ENCODE measurements at regions of chr11 and their contacts with region 1.

Region 1: GRCh38 chr11:77994412-77995362 is at the start of gene INTS4:
- DNase-seq: peak; percentile 99
- H3K4me3 ChIP-seq: peak within 1 kb of the TSS; percentile 69
- H3K27ac ChIP-seq: peak within 1 kb of the TSS; percentile 65
- H3K4me1 ChIP-seq: no peaks in the 10 kb centered on the region
- H3K27me3 ChIP-seq: no peaks in the 10 kb centered on the region
- CTCF ChIP-seq: no peak
- total RNA-seq, gene INTS4: 21.5 to 28.0 TPM

Region 2: GRCh38 chr11:77801477-77801876 is 193.2 kb before region 1 on chr11:
- intact Hi-C with region 1: no loop called
- DNase-seq: no peak
- H3K4me3 ChIP-seq: no peak overlapping the region
- H3K27ac ChIP-seq: no peak overlapping the region
- H3K4me1 ChIP-seq: no peaks in the 10 kb centered on the region
- H3K27me3 ChIP-seq: no peaks in the 10 kb centered on the region
- CTCF ChIP-seq: no peak

Region 3: GRCh38 chr11:77820563-77821348 is 173.9 kb before region 1 on chr11 and contains the starts of genes AAMDC and RSF1:
- intact Hi-C with region 1: loop called (anchors 10 kb)
- DNase-seq: peak; percentile 100
- H3K4me3 ChIP-seq: peak within 1 kb of the TSS; percentile 93
- H3K27ac ChIP-seq: peak within 1 kb of the TSS; percentile 95
- H3K4me1 ChIP-seq: peaks cover 9% of the 10 kb centered on the region
- H3K27me3 ChIP-seq: no peaks in the 10 kb centered on the region
- CTCF ChIP-seq: peak; percentile 55
- total RNA-seq, gene AAMDC: 12.9 to 20.0 TPM
- total RNA-seq, gene RSF1: 36.7 to 68.2 TPM

Region 4: DNA sequence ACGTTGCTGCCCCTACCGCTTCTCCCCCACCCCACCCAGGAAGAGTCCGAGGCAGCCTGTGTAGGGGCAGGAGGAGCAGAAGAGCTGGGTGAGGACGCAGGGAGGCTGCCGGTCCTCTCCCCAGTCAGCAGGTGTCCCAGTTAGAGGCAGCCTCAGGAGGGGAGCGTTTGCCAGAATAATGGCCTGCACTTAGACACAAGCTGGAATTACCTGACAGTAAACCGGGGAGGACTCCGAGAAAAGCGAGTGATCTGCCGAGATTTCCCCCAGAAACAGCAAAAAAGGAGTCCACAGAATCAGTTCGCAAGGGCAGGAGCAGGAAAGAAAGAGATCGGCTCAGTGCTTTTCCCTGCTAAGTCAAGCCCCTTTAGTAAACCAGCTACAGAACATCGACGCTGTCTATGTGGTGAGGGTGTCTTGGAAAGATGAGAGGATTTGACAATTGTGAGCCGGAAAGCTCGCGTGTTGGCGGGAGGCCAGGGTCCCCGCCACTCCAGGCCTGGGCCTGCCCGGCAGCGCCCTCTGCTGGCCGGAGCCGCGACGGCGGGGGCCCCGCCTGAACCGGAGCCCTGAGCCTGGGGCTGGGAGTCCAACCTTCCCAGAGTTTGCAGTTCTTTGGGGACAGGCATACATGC is 51.3 kb after region 1 on chr11:
- intact Hi-C with region 1: loop called (anchors 5 kb)
- DNase-seq: peak; percentile 84
- H3K4me3 ChIP-seq: peak overlapping the region; percentile 34
- H3K27ac ChIP-seq: no peak overlapping the region
- H3K4me1 ChIP-seq: no peaks in the 10 kb centered on the region
- H3K27me3 ChIP-seq: no peaks in the 10 kb centered on the region
- CTCF ChIP-seq: peak; percentile 99